Activated CD8-positive, alpha-beta T cell treated with anti-CD3 and anti-CD28 coated beads for 36 hours (primary cell): ENCODE measurements at regions of chr16 and their contacts with region 1.

Region 1: GRCh38 chr16:85615852-85616606 is 2.9 kb downstream of the GSE1 start:
- DNase-seq: peak; percentile 93
- ATAC-seq: peak; percentile 57
- H3K4me3 Mint-ChIP-seq: peak overlapping the region; percentile 70
- H3K27ac Mint-ChIP-seq: peak overlapping the region; percentile 75
- H3K4me1 Mint-ChIP-seq: peaks cover 44% of the 10 kb centered on the region
- H3K27me3 Mint-ChIP-seq: no peaks in the 10 kb centered on the region
- CTCF ChIP-seq: peak; percentile 98

Region 2: GRCh38 chr16:85393674-85394483 is 222.2 kb before region 1 on chr16:
- CTCF ChIA-PET with region 1: interaction called, 18 read pairs
- POLR2A ChIA-PET with region 1: no interaction called
- intact Hi-C with region 1: no loop called
- DNase-seq: peak; percentile 77
- ATAC-seq: peak; percentile 88
- H3K4me3 Mint-ChIP-seq: no peak overlapping the region
- H3K27ac Mint-ChIP-seq: no peak overlapping the region
- H3K4me1 Mint-ChIP-seq: no peaks in the 10 kb centered on the region
- H3K27me3 Mint-ChIP-seq: peaks cover 2% of the 10 kb centered on the region
- CTCF ChIP-seq: peak; percentile 91

Region 3: GRCh38 chr16:85428168-85428898 is 187.7 kb before region 1 on chr16:
- CTCF ChIA-PET with region 1: interaction called, 95 read pairs
- POLR2A ChIA-PET with region 1: no interaction called
- intact Hi-C with region 1: loop called (anchors 5 kb)
- DNase-seq: peak; percentile 78
- ATAC-seq: peak; percentile 90
- H3K4me3 Mint-ChIP-seq: no peak overlapping the region
- H3K27ac Mint-ChIP-seq: no peak overlapping the region
- H3K4me1 Mint-ChIP-seq: no peaks in the 10 kb centered on the region
- H3K27me3 Mint-ChIP-seq: no peaks in the 10 kb centered on the region
- CTCF ChIP-seq: peak; percentile 68

Region 4: GRCh38 chr16:85491058-85491771 is 124.8 kb before region 1 on chr16:
- CTCF ChIA-PET with region 1: interaction called, 46 read pairs
- POLR2A ChIA-PET with region 1: interaction called, 3 read pairs
- intact Hi-C with region 1: no loop called
- DNase-seq: peak; percentile 72
- ATAC-seq: peak; percentile 88
- H3K4me3 Mint-ChIP-seq: no peak overlapping the region
- H3K27ac Mint-ChIP-seq: no peak overlapping the region
- H3K4me1 Mint-ChIP-seq: peaks cover 19% of the 10 kb centered on the region
- H3K27me3 Mint-ChIP-seq: no peaks in the 10 kb centered on the region
- CTCF ChIP-seq: peak; percentile 76

Region 5: DNA sequence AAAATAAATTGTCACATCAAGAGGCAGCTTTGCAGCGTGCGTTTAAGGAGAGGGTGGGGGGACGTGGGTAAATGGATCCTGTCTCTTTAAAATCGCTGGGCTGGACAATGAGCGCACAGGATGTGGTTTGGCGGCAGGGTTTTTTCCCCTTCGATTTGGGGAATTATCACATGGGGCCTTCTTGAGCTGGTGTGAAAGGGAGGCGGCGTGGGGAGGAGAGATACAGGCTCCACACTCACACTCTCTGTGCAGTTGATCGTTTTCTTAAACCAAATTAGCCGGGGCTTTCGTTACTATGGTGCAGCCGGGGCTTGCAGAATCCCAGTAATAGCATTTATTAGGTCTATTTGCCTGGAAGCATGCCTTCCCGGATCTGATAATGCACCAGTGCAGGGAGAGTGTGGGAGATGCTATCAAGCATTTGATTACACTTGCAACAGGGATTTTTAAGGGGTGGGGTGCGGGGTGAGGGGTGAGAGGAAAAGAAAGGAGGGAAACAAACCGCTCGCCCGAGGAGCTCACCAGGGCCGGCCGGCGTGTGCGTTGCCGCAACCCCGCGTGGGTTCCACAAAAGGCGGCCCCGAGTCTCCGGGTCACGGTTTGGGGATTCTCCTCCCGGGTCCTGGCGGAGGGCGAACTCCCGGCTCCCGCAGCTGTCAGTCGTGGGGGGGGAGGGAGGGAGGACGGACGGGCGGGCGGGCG is 61.8 kb before region 1 on chr16:
- CTCF ChIA-PET with region 1: interaction called, 59 read pairs
- POLR2A ChIA-PET with region 1: interaction called, 52 read pairs
- intact Hi-C with region 1: loop called (anchors 2 kb)
- DNase-seq: peak; percentile 95
- ATAC-seq: peak; percentile 52
- H3K4me3 Mint-ChIP-seq: peak overlapping the region; percentile 78
- H3K27ac Mint-ChIP-seq: peak overlapping the region; percentile 86
- H3K4me1 Mint-ChIP-seq: peaks cover 54% of the 10 kb centered on the region
- H3K27me3 Mint-ChIP-seq: no peaks in the 10 kb centered on the region
- CTCF ChIP-seq: no peak

Region 6: GRCh38 chr16:85583491-85584181 is 32.4 kb before region 1 on chr16:
- CTCF ChIA-PET with region 1: interaction called, 12 read pairs
- POLR2A ChIA-PET with region 1: interaction called, 3 read pairs
- intact Hi-C with region 1: no loop called
- DNase-seq: peak; percentile 66
- ATAC-seq: peak; percentile 90
- H3K4me3 Mint-ChIP-seq: peak overlapping the region; percentile 62
- H3K27ac Mint-ChIP-seq: peak overlapping the region; percentile 83
- H3K4me1 Mint-ChIP-seq: peaks cover 38% of the 10 kb centered on the region
- H3K27me3 Mint-ChIP-seq: no peaks in the 10 kb centered on the region
- CTCF ChIP-seq: no peak

Region 7: GRCh38 chr16:85659805-85660495 is 43.9 kb after region 1 on chr16:
- CTCF ChIA-PET with region 1: interaction called, 22 read pairs
- POLR2A ChIA-PET with region 1: no interaction called
- intact Hi-C with region 1: no loop called
- DNase-seq: peak; percentile 83
- ATAC-seq: peak; percentile 97
- H3K4me3 Mint-ChIP-seq: no peak overlapping the region
- H3K27ac Mint-ChIP-seq: no peak overlapping the region
- H3K4me1 Mint-ChIP-seq: no peaks in the 10 kb centered on the region
- H3K27me3 Mint-ChIP-seq: no peaks in the 10 kb centered on the region
- CTCF ChIP-seq: peak; percentile 82